Astrocyte of the cerebellum (primary cell): ENCODE measurements at regions of chr21 and their contacts with region 1.

Region 1: GRCh38 chr21:45129189-45129923 is 55.0 kb downstream of the ADARB1 start:
- DNase-seq: no peak
- H3K4me3 ChIP-seq: no peak overlapping the region
- CTCF ChIP-seq: no peak

Region 2: DNA sequence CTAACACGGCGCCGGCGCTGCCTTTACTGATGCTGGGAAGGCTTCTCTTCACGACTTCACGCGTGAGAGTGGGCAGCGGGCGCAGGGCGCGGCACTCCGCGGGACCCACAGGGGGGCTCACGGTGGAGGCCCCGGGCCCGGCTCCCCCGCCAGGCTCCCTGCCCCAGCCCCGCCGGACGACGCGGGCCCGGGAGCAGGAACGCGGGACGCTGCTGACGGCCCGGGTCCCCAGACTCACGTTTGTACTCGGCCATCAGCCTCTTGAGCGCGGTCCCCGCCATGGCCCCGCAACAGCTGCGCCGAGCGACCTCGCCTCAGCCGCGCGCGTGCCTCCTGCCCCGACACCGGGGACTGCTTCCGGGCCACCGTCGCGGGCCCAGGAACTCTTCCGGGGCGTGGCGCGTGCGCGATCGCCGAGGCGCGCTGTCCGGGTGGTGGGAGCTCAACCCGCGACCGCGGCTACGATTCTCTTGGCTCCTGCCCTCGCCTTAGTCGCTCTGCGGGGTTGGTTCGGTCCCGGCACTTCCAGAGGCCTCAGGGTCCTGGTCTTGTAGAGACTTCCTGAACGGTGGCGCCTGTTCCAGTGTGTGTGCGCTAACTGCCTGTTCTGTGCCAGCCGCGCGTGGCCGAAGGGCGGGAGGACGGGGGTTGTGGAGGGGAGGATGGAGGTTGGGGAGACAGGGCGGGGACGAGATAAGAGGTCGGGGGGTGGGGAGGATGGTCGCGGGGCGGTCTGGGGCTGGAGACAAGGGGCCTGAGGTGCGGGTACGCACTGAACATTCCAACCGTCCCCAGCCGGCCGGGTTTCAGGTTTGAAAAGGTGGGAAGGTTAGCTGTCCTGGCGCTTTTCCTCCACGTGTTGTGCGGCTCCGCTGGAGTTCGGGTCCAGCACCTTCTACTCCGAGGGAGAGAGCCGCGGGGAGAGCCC is 327.6 kb before region 1 on chr21 and contains the start of gene UBE2G2:
- in situ Hi-C with region 1: loop called (anchors 10 kb)
- DNase-seq: no peak
- H3K4me3 ChIP-seq: peak within 1 kb of the TSS; percentile 81
- CTCF ChIP-seq: no peak

Region 3: GRCh38 chr21:44873356-44874239 is 255.8 kb before region 1 on chr21 and contains the start of gene PTTG1IP:
- in situ Hi-C with region 1: loop called (anchors 5 kb)
- DNase-seq: peak; percentile 90
- H3K4me3 ChIP-seq: peak within 1 kb of the TSS; percentile 89
- CTCF ChIP-seq: no peak

Region 4: DNA sequence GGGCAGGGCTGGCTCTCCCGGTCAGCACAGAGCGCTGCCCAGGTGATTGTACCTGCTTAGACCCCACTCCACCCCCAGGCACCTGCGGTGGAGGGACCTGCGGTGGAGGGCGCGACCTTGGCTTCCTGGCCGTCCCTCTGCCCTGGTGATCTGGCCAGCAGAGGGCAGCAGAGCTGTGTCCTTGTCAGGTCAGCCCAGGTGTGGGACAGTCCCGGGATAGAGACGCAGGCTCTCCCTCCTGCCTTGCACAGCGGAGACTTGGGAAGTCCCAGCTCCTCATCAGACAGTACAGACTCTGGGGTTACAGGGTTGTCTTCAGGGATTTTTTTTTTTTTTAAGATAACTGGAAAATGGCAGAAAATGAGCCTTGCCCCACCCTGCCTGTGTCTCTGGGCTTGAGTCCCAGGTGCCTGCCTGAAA is 179.6 kb before region 1 on chr21:
- in situ Hi-C with region 1: loop called (anchors 5 kb)
- DNase-seq: peak; percentile 35
- H3K4me3 ChIP-seq: no peak overlapping the region
- CTCF ChIP-seq: peak; percentile 91

Region 5: GRCh38 chr21:44965251-44966022 is 163.9 kb before region 1 on chr21:
- in situ Hi-C with region 1: no loop called
- DNase-seq: no peak
- H3K4me3 ChIP-seq: no peak overlapping the region
- CTCF ChIP-seq: no peak

Region 6: GRCh38 chr21:45055861-45056260 is 73.5 kb before region 1 on chr21:
- in situ Hi-C with region 1: no loop called
- DNase-seq: no peak
- H3K4me3 ChIP-seq: no peak overlapping the region
- CTCF ChIP-seq: no peak

Region 7: GRCh38 chr21:45087022-45087823 is 42.1 kb before region 1 on chr21:
- in situ Hi-C with region 1: loop called (anchors 5 kb)
- DNase-seq: no peak
- H3K4me3 ChIP-seq: no peak overlapping the region
- CTCF ChIP-seq: no peak